ENCODE measurements at regions of chr11 and their contacts with region 1.

Region 1: GRCh38 chr11:118435893-118436624 is at the start of gene KMT2A:
- DNase-seq: peak; percentile 93 to 100 (median 97)

Region 2: GRCh38 chr11:118304568-118305248 is 131.4 kb before region 1 on chr11 and contains the start of gene CD3E:
- intact Hi-C with region 1: no loop called
- DNase-seq: no peak

Region 3: GRCh38 chr11:118321386-118322121 is 114.5 kb before region 1 on chr11:
- intact Hi-C with region 1: no loop called
- DNase-seq: no peak

Region 4: DNA sequence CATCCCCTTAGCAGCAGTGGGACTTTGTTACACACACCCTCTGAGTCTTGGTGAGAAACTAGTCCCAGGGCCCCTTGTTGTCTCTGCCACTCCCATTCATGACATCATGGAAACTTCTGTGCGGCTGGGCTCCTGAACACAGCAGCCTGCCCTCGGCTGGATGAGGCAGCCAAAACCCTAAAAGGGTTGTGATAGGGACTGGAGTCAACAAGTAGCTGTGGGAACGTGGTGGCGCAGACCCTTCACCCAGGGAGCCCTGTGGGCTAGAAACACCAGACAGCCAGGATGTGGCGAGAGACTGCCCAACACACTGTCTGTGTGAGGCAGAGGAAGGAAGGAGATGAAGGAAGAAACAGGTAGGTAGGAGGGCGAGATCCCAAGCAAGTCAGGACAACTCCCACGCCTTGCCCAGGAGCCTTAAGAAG is 97.4 kb before region 1 on chr11:
- intact Hi-C with region 1: no loop called
- DNase-seq: no peak

Region 5: GRCh38 chr11:118359295-118359958 is 76.6 kb before region 1 on chr11 and contains the start of gene UBE4A:
- intact Hi-C with region 1: loop called (anchors 2 kb)
- DNase-seq: peak; percentile 92 to 99 (median 95)

Region 6: DNA sequence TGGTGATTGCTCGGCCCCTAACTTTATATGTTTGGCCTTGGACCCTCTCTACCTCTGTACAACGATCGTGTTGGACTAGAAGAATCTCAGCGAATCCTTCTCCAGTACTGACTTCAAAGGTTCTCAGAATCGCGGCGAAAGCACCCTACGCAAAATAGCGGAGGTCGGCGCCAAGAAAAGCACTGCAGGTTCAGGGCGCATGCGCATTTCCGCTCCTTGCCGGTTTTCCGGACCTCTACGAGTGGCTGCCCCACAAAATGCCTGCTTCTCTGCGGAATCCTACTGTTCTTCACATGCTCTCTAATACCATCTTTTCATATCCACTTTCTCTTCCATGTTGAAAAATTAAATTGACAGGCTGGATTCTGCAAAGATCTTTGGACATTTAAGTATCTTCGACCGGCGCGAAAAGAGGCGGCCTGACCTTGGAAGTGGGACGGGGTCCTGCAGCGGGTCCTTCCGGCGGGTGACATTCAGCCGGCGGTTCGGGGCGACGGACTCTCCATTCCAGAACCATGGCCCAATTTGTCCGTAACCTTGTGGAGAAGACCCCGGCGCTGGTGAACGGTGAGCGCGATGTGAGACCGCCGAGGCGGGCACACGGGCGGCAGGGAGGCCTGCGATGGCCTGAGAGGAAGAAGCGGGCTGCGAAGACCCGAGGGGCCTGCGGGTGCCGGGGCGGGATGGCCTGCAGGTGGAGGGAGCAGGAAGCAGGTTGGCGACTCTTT is 34.7 kb before region 1 on chr11 and contains the start of gene ATP5MG:
- intact Hi-C with region 1: loop called (anchors 1 kb)
- DNase-seq: peak; percentile 77 to 97 (median 88)

Region 7: DNA sequence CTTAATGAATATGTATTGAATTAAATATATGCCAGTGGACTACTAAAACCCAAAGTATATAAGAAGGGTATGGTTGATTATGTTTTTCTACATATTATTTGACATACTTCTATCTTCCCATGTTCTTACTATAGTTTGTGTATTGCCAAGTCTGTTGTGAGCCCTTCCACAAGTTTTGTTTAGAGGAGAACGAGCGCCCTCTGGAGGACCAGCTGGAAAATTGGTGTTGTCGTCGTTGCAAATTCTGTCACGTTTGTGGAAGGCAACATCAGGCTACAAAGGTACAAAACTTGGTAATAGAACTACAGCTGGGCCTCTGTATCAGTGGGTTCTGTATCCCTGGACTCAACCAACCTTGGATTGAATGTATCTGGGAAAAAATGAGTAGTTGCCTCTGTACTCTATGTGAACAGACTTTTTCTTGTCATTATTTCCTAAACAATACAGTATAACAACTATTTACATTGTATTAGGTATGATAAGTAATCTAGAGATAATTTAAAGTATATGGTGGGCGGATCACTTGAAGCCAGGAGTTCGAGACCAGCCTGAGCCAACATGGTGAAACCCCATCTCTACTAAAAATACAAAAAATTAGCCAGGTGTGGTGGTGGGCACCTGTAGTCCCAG is 52.5 kb after region 1 on chr11:
- intact Hi-C with region 1: loop called (anchors 5 kb)
- DNase-seq: peak; percentile 37 to 95 (median 68)

Region 8: GRCh38 chr11:118918128-118918685 is 482.1 kb after region 1 on chr11:
- intact Hi-C with region 1: no loop called
- DNase-seq: peak in 1 of 10 donors; percentile 80